MCF 10A (cell line): ENCODE measurements at regions of chr22 and their contacts with region 1.

Region 1: GRCh38 chr22:46317646-46318045 is 17.9 kb upstream of the TRMU start:
- DNase-seq: no peak
- H3K4me3 Mint-ChIP-seq: no peak overlapping the region
- H3K27ac Mint-ChIP-seq: no peak overlapping the region
- H3K4me1 Mint-ChIP-seq: no peaks in the 10 kb centered on the region
- H3K27me3 Mint-ChIP-seq: no peaks in the 10 kb centered on the region
- CTCF ChIP-seq: no peak

Region 2: DNA sequence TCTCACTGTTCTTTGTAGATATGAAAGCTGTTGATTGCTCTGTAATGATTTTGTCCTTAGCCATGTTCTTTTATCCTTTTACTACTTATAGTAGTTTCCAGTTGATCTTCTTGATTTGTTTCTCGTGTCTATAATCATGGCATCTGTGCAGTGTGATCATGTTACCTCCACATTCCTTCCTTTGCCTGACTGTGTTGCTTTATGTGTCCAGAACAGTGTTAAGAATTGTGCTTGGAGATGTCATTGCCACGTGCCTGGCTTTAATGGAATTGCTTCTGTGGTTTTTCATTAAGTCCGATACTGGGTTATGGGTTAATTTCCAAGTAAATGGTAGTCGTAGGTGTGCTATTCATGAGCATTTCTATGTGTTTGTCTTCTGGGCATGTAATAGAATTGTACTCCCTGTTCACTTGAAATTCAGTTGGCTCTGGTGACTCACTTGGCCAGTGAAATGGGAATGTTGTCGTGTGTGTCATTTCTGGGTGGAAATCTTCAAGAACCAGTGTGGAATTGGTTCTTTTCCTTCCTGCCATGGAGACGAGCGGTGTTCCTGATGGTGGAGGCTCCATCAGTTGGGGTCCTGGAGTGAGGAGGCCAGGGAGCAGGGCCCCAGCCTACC is 14.2 kb before region 1 on chr22:
- CTCF ChIA-PET with region 1: interaction called, 16 read pairs
- POLR2A ChIA-PET with region 1: no interaction called
- intact Hi-C with region 1: no loop called
- DNase-seq: peak; percentile 9
- H3K4me3 Mint-ChIP-seq: no peak overlapping the region
- H3K27ac Mint-ChIP-seq: peak overlapping the region; percentile 82
- H3K4me1 Mint-ChIP-seq: peaks cover 21% of the 10 kb centered on the region
- H3K27me3 Mint-ChIP-seq: no peaks in the 10 kb centered on the region
- CTCF ChIP-seq: no peak